ENCODE measurements at regions of chr14 and their contacts with region 1.

Region 1: DNA sequence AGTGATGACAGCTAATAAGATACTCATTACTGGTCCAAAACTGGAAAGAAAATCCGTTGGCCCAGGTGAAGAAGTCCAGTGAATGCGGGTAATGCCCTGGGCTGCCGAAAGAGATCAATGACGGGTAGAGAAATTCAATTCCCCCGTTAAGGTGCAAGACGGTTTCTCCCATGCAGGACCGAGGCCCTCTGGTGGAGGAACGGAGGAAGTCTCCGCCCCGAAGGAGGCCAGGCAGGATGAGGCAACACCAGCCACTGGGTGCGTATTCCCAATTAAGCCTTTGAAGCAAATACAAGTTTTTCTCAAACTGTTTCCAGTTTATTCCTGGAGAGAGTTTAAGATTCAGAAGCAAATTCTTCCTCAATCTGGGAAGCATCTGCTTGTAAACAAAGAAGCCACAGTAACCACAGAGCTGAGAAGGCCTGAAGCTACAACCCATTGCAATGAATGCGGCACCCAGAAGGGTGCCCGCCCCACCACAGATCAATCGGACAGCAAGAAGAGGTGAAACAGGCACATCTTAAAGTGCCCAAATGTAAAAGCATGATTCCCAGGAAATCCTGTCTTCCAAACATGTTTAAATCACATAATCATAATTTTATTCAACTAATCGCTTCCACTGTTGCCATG is 118.5 kb downstream of the TTC7B start:
- DNase-seq: peak; percentile 83
- ATAC-seq: peak; percentile 96
- H3K4me3 Mint-ChIP-seq: no peak overlapping the region
- H3K27ac Mint-ChIP-seq: no peak overlapping the region
- H3K4me1 Mint-ChIP-seq: no peaks in the 10 kb centered on the region
- H3K27me3 Mint-ChIP-seq: no peaks in the 10 kb centered on the region
- CTCF ChIP-seq: peak; percentile 96

Region 2: GRCh38 chr14:90368946-90369721 is 328.6 kb before region 1 on chr14:
- CTCF ChIA-PET with region 1: interaction called, 19 read pairs
- POLR2A ChIA-PET with region 1: no interaction called
- intact Hi-C with region 1: no loop called
- DNase-seq: no peak
- ATAC-seq: peak; percentile 53
- H3K4me3 Mint-ChIP-seq: no peak overlapping the region
- H3K27ac Mint-ChIP-seq: no peak overlapping the region
- H3K4me1 Mint-ChIP-seq: no peaks in the 10 kb centered on the region
- H3K27me3 Mint-ChIP-seq: no peaks in the 10 kb centered on the region
- CTCF ChIP-seq: no peak

Region 3: DNA sequence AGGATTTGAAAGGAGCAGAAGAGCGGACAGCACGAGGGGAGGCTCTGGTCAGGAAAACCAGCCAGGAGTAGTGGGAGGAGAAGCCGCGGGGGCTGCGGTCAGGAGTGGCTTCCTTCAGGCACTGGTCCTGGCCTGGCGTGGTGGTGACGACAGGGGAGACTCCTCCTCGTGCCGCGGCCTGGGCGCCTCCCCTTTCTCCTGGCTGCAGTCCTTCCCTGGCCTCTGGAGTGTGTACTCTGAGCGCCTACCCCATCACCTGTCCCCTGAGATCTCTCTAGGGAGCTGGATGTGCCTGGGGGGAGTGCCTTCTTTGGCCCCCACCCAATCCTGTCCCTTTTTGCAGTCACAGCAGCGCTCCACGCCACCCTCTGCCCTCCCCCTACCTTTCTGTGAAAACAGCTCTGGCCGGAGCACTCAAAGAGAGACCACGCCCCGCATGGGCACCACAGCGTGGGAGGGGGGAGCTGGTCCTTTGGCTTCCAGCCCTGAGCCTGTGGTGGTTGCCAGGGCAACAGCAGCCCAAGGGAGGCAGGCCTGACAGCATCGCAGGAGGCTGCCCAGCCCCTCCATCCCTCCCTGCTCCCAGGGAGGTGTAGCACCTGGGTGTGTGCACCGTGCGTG is 175.0 kb before region 1 on chr14:
- CTCF ChIA-PET with region 1: interaction called, 5 read pairs
- POLR2A ChIA-PET with region 1: no interaction called
- intact Hi-C with region 1: loop called (anchors 10 kb)
- DNase-seq: no peak
- ATAC-seq: no peak
- H3K4me3 Mint-ChIP-seq: no peak overlapping the region
- H3K27ac Mint-ChIP-seq: no peak overlapping the region
- H3K4me1 Mint-ChIP-seq: no peaks in the 10 kb centered on the region
- H3K27me3 Mint-ChIP-seq: peaks cover 2% of the 10 kb centered on the region
- CTCF ChIP-seq: no peak

Region 4: GRCh38 chr14:90645842-90646443 is 51.7 kb before region 1 on chr14:
- CTCF ChIA-PET with region 1: interaction called, 23 read pairs
- POLR2A ChIA-PET with region 1: no interaction called
- intact Hi-C with region 1: no loop called
- DNase-seq: no peak
- ATAC-seq: no peak
- H3K4me3 Mint-ChIP-seq: no peak overlapping the region
- H3K27ac Mint-ChIP-seq: no peak overlapping the region
- H3K4me1 Mint-ChIP-seq: no peaks in the 10 kb centered on the region
- H3K27me3 Mint-ChIP-seq: no peaks in the 10 kb centered on the region
- CTCF ChIP-seq: no peak

Region 5: DNA sequence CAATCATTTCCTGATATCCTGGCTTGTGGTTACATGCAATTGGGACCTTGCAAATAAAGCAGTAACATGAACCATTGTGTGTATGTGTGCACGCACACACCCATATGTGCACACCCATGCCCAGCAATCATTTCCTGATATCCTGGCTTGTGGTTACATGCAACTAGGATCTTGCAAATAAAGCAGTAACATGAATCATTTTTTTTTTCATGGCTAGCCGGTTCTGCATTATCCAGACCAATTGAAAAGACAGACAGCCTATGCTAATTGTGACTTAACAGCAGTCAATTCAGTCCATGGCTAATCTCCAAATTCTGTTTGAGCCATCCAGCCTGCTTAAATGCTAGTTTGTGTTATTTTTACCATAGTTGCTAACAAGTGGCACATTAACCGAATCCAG is 15.8 kb before region 1 on chr14:
- CTCF ChIA-PET with region 1: interaction called, 23 read pairs
- POLR2A ChIA-PET with region 1: no interaction called
- intact Hi-C with region 1: no loop called
- DNase-seq: no peak
- ATAC-seq: no peak
- H3K4me3 Mint-ChIP-seq: no peak overlapping the region
- H3K27ac Mint-ChIP-seq: no peak overlapping the region
- H3K4me1 Mint-ChIP-seq: peaks cover 26% of the 10 kb centered on the region
- H3K27me3 Mint-ChIP-seq: no peaks in the 10 kb centered on the region
- CTCF ChIP-seq: no peak

Region 6: DNA sequence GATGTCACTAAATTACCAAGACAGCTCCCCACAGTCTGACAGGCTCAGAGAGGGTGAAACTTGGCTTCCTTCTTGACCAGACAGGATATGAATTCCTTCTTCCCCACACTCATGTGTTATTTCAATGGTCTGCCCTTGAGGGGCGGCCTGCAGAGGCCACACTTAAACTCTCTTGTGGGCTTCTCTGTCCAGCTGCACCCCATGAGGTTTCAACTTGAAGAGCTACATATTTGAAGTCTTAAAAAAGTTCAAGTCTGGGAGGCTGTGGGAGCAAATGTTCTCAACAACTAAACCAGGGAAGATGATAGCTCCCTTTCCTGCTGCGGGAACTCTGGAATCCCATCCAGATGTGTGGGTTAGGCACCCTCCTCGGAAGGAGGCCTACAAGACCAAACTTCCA is 20.2 kb after region 1 on chr14:
- CTCF ChIA-PET with region 1: interaction called, 11 read pairs
- POLR2A ChIA-PET with region 1: interaction called, 3 read pairs
- intact Hi-C with region 1: no loop called
- DNase-seq: no peak
- ATAC-seq: no peak
- H3K4me3 Mint-ChIP-seq: no peak overlapping the region
- H3K27ac Mint-ChIP-seq: no peak overlapping the region
- H3K4me1 Mint-ChIP-seq: peaks cover 6% of the 10 kb centered on the region
- H3K27me3 Mint-ChIP-seq: no peaks in the 10 kb centered on the region
- CTCF ChIP-seq: no peak

Region 7: GRCh38 chr14:91911474-91912032 is 1213.9 kb after region 1 on chr14:
- CTCF ChIA-PET with region 1: no interaction called
- POLR2A ChIA-PET with region 1: no interaction called
- intact Hi-C with region 1: no loop called
- DNase-seq: peak; percentile 57
- ATAC-seq: peak; percentile 97
- H3K4me3 Mint-ChIP-seq: no peak overlapping the region
- H3K27ac Mint-ChIP-seq: no peak overlapping the region
- H3K4me1 Mint-ChIP-seq: peaks cover 19% of the 10 kb centered on the region
- H3K27me3 Mint-ChIP-seq: no peaks in the 10 kb centered on the region
- CTCF ChIP-seq: peak; percentile 52